Calu3 (cell line): ENCODE measurements at regions of chrX and their contacts with region 1.

Region 1: DNA sequence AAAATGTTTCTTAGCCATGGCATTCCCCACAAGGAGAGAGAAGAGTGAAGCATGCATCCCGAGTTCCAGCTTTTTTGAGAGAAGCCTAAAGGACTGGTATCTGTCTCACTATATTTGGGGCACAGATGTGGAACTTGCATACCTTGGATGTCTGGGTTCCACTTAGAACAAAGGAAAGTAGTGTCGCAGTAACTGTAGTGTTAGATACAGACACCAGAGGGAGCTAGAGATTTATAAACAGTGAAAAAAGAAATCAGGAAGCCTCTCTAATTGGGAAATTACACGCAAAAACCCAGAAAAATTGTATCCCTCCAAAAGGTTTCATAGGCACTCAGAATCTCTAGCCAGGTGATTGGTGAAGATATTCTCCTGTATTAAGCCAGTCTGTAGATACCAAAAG is 34.4 kb downstream of the AGTR2 start:
- DNase-seq: peak; percentile 14
- H3K4me3 Mint-ChIP-seq: no peak overlapping the region
- H3K27ac Mint-ChIP-seq: no peak overlapping the region
- H3K4me1 Mint-ChIP-seq: no peaks in the 10 kb centered on the region
- H3K27me3 Mint-ChIP-seq: no peaks in the 10 kb centered on the region
- CTCF ChIP-seq: peak; percentile 66

Region 2: GRCh38 chrX:115988825-115989224 is 216.1 kb before region 1 on chrX:
- CTCF ChIA-PET with region 1: no interaction called
- intact Hi-C with region 1: loop called (anchors 10 kb)
- DNase-seq: no peak
- H3K4me3 Mint-ChIP-seq: no peak overlapping the region
- H3K27ac Mint-ChIP-seq: no peak overlapping the region
- H3K4me1 Mint-ChIP-seq: no peaks in the 10 kb centered on the region
- H3K27me3 Mint-ChIP-seq: no peaks in the 10 kb centered on the region
- CTCF ChIP-seq: peak; percentile 35

Region 3: DNA sequence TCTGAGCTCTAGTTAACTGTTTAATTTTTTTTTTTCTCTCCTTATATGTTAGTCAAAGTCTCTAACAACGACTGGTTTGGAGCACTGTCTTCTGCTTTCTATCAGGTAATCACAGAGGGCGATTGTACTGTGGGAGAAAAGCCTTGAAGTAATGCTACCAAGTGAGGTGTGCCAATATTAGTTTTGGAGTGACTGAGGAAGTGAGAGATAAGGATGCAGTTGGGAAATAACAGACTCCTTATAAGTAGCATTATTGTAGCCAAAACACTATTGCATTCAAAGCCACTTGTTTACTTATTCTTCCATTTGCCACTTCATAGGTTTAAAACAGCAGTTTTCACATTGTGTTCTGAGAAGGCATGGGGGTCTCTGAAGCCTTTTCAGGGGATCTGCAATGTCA is 152.4 kb after region 1 on chrX:
- CTCF ChIA-PET with region 1: interaction called, 3 read pairs
- intact Hi-C with region 1: loop called (anchors 1 kb)
- DNase-seq: peak; percentile 2
- H3K4me3 Mint-ChIP-seq: no peak overlapping the region
- H3K27ac Mint-ChIP-seq: peak overlapping the region; percentile 24
- H3K4me1 Mint-ChIP-seq: peaks cover 11% of the 10 kb centered on the region
- H3K27me3 Mint-ChIP-seq: no peaks in the 10 kb centered on the region
- CTCF ChIP-seq: no peak

Region 4: GRCh38 chrX:116395752-116396151 is 190.8 kb after region 1 on chrX:
- CTCF ChIA-PET with region 1: no interaction called
- intact Hi-C with region 1: no loop called
- DNase-seq: no peak
- H3K4me3 Mint-ChIP-seq: no peak overlapping the region
- H3K27ac Mint-ChIP-seq: no peak overlapping the region
- H3K4me1 Mint-ChIP-seq: no peaks in the 10 kb centered on the region
- H3K27me3 Mint-ChIP-seq: no peaks in the 10 kb centered on the region
- CTCF ChIP-seq: no peak

Region 5: DNA sequence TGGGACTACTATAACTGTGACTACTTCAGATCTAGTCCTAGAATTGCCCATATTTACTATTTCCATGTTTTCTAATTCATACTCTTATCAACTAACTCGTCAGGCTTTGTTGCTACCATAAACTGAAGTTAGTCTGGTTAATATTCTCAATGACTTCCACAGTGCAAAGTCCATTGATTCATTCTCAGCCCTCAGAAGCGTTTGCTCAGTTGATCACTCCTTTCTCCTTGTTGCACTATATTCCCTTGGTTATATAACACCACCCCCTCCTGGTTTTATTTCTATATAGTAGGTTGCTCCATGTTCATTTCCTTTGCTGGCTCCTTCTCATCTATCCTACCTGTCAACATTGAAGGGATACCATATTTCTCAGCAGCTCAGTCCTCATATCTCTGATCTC is 204.3 kb after region 1 on chrX:
- CTCF ChIA-PET with region 1: no interaction called
- intact Hi-C with region 1: loop called (anchors 2 kb)
- DNase-seq: no peak
- H3K4me3 Mint-ChIP-seq: no peak overlapping the region
- H3K27ac Mint-ChIP-seq: no peak overlapping the region
- H3K4me1 Mint-ChIP-seq: peaks cover 55% of the 10 kb centered on the region
- H3K27me3 Mint-ChIP-seq: no peaks in the 10 kb centered on the region
- CTCF ChIP-seq: no peak

Region 6: DNA sequence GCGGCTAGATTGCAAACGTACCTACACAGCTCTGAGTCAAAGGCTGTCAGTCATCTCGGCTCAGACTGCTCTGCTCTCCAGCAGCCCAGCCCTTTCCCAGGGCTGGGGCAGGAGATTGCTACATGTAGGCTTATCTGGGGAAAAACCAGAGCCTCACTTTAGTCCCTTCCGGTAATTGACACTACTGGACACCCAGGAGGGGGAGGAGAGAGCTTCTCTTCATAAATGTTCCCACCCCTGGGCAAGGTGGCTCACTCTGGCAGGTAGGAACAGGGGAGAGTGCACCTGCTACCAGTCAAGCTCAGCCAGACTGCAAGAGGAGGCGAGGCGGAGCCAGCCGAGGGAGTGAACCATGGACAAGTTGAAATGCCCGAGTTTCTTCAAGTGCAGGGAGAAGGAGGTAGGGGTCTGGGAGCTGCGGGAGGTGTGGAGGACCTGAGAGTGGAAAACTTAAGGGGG is 231.5 kb after region 1 on chrX and contains the start of gene SLC6A14:
- CTCF ChIA-PET with region 1: no interaction called
- intact Hi-C with region 1: loop called (anchors 10 kb)
- DNase-seq: peak; percentile 83
- H3K4me3 Mint-ChIP-seq: peak within 1 kb of the TSS; percentile 81
- H3K27ac Mint-ChIP-seq: peak within 1 kb of the TSS; percentile 92
- H3K4me1 Mint-ChIP-seq: peaks cover 19% of the 10 kb centered on the region
- H3K27me3 Mint-ChIP-seq: no peaks in the 10 kb centered on the region
- CTCF ChIP-seq: no peak
- total RNA-seq, gene SLC6A14: 77.7 and 83.7 TPM in 2 replicates

Region 7: DNA sequence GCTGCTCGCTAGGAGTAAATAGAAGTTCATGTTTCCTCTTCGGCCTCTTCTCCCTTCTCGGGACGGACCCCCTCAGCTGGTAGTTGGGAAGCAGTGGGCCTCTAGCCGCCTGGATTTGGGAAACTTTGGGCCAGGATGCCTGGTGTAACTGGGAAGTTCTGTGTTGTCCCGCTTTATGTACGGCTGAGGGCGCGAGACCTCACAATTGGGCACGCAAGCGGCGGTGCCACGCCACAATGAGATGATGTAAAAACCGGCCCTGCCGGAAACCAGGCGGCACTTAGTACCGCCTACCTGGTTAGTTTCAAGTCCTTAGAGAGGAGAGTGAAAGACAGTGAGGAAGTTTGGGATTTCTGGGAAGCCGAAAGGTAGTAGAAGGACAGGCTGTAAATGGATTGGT is 257.9 kb after region 1 on chrX and contains the start of gene CT83:
- CTCF ChIA-PET with region 1: no interaction called
- intact Hi-C with region 1: loop called (anchors 10 kb)
- DNase-seq: peak; percentile 77
- H3K4me3 Mint-ChIP-seq: peak within 1 kb of the TSS; percentile 89
- H3K27ac Mint-ChIP-seq: peak within 1 kb of the TSS; percentile 98
- H3K4me1 Mint-ChIP-seq: peaks cover 19% of the 10 kb centered on the region
- H3K27me3 Mint-ChIP-seq: no peaks in the 10 kb centered on the region
- CTCF ChIP-seq: no peak
- total RNA-seq, gene CT83: 30.5 and 35.2 TPM in 2 replicates

Region 8: GRCh38 chrX:118126286-118126685 is 1921.4 kb after region 1 on chrX:
- CTCF ChIA-PET with region 1: no interaction called
- intact Hi-C with region 1: loop called (anchors 5 kb)
- DNase-seq: no peak
- H3K4me3 Mint-ChIP-seq: no peak overlapping the region
- H3K27ac Mint-ChIP-seq: no peak overlapping the region
- H3K4me1 Mint-ChIP-seq: no peaks in the 10 kb centered on the region
- H3K27me3 Mint-ChIP-seq: no peaks in the 10 kb centered on the region
- CTCF ChIP-seq: no peak